ENCODE measurements at regions of chr1 and their contacts with region 1.

Region 1: DNA sequence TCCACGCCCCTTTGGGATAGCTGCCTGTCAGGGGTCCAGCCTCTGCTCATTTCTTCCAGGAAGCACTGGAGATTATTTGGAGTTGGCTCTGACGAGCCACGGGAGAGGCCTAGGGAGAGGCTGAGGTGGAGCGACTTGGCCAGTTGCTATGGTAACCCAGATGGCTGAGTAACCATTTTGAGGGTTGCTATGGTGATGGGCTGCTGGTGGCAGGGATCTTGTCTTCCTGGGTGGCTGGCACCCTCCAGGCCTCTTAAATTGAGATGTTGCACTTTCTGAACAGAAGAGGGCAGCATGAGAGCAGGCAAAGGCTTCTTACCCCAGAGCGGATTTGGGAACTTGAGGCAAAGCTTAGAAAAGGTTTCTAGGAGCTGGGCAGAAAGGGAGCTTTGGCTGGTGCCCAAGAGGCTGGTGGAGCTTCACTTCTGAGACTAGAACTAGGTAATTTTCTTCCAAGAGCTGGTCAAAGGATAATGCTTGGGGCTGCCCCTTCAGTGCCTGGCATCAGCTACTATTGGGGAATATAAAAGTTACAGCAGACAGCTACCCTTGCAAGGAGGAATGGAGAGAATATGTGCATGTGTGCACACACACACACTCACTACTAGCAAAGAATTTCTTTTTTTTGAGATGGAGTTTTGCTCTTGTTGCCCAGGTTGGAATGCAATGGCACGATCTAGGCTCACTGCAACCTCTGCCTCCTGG is 72.5 kb downstream of the NDUFS5 start:
- DNase-seq: peak; percentile 92
- ATAC-seq: peak; percentile 78
- H3K4me3 ChIP-seq: no peak overlapping the region
- H3K27ac ChIP-seq: no peak overlapping the region
- H3K4me1 ChIP-seq: peaks cover 6% of the 10 kb centered on the region
- H3K27me3 ChIP-seq: no peaks in the 10 kb centered on the region
- CTCF ChIP-seq: peak; percentile 91
- POLR2A ChIP-seq: peak; percentile 41; the same call in 1 of the 2 replicates
- RAD21 ChIP-seq: peak; percentile 97

Region 2: DNA sequence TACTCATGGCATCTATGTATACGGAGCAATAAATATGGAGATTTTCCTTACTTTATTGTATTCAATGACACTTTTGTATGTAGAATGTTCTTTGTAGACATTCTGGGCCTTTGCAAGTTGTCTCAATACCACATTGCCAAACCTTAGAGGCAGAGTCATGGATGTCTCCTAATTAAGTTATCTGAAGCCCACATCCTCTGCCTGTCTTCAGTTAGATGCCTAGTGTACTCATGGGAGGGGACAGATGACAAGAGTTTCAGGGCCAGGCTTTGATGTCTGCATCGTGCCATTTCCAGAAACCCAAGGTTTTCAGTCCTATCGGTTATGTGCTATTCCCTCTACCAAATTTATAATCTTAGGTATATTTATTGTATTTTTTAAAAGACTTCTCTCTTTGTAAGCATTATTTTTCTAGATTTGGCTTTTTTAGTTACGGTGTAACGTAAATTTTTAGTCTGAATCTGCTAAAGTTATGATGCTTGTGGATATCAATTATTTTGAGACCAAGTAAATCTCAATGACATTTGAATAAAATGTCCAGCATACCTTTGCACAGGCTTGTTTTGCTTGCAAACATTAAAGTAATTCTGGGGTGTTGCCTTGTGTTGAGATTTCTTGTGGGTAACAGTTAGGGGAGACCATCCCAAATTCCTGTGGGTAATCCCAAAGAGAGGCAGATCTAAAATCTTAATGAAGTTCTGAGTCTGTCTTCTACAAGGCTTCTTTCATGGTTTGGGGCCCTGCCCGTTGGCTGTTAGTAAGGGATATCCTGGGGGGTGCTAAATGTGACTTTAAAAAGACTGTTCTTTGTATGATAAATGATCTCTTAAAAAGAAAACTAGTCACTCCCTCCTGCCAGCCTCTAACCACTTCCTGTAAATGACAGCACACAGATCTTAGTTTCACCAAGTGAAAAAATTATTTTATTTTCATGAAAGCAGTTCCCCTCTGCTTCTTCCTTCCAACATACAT is 97.8 kb after region 1 on chr1:
- CTCF ChIA-PET with region 1: interaction called, 7 read pairs
- POLR2A ChIA-PET with region 1: no interaction called
- dilution Hi-C with region 1: no loop called
- in situ Hi-C with region 1: loop called (anchors 5 kb)
- intact Hi-C with region 1: loop called (anchors 1 kb)
- DNase-seq: peak; percentile 50
- ATAC-seq: no peak
- H3K4me3 ChIP-seq: no peak overlapping the region
- H3K27ac ChIP-seq: no peak overlapping the region
- H3K4me1 ChIP-seq: peaks cover 18% of the 10 kb centered on the region
- H3K27me3 ChIP-seq: no peaks in the 10 kb centered on the region
- CTCF ChIP-seq: no peak
- POLR2A ChIP-seq: no peak
- RAD21 ChIP-seq: no peak

Region 3: GRCh38 chr1:39297551-39297950 is 198.9 kb after region 1 on chr1:
- CTCF ChIA-PET with region 1: no interaction called
- POLR2A ChIA-PET with region 1: no interaction called
- dilution Hi-C with region 1: no loop called
- in situ Hi-C with region 1: no loop called
- intact Hi-C with region 1: loop called (anchors 1 kb)
- DNase-seq: peak; percentile 68
- ATAC-seq: peak; percentile 67
- H3K4me3 ChIP-seq: no peak overlapping the region
- H3K27ac ChIP-seq: no peak overlapping the region
- H3K4me1 ChIP-seq: peaks cover 3% of the 10 kb centered on the region
- H3K27me3 ChIP-seq: no peaks in the 10 kb centered on the region
- CTCF ChIP-seq: no peak
- POLR2A ChIP-seq: no peak
- RAD21 ChIP-seq: no peak

Region 4: GRCh38 chr1:39653546-39654031 is 554.9 kb after region 1 on chr1:
- CTCF ChIA-PET with region 1: no interaction called
- POLR2A ChIA-PET with region 1: no interaction called
- dilution Hi-C with region 1: no loop called
- in situ Hi-C with region 1: no loop called
- intact Hi-C with region 1: loop called (anchors 10 kb)
- DNase-seq: peak; percentile 78
- ATAC-seq: peak; percentile 89
- H3K4me3 ChIP-seq: no peak overlapping the region
- H3K27ac ChIP-seq: no peak overlapping the region
- H3K4me1 ChIP-seq: no peaks in the 10 kb centered on the region; the same call in 1 of the 2 replicates
- H3K27me3 ChIP-seq: peaks cover 27% of the 10 kb centered on the region
- CTCF ChIP-seq: peak; percentile 92
- POLR2A ChIP-seq: no peak
- RAD21 ChIP-seq: peak; percentile 91

Measured in IMR-90 (cell line).